Activated CD4-positive, alpha-beta memory T cell treated with anti-CD3 and anti-CD28 coated beads for 36 hours (primary cell): ENCODE measurements at regions of chr6 and their contacts with region 1.

Region 1: DNA sequence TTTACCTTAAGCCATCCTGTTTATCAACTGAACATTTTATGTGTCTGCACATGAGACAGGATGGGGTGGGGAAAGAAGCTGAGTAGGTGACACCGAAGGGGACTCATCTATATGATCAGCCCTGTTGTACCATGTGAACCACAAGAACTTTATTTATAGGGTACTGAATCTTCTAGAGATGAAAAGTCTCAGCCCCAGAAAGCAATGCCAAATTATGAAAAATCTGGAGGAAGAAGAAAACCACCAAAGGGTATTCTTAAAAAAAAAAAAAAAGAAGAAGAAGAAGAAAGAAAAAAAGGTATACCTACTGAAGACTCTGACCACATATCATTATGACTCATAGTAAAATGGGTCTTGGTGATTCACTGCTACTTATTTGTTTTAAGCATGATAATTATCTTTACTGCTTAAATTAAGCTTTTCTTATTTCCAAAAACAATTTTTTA is 39.8 kb upstream of the HBS1L start:
- DNase-seq: peak; percentile 50
- H3K4me3 Mint-ChIP-seq: no peak overlapping the region
- H3K27ac Mint-ChIP-seq: peak overlapping the region; percentile 76
- H3K4me1 Mint-ChIP-seq: peaks cover 49% of the 10 kb centered on the region
- H3K27me3 Mint-ChIP-seq: no peaks in the 10 kb centered on the region

Region 2: GRCh38 chr6:134938896-134939295 is 155.5 kb before region 1 on chr6:
- CTCF ChIA-PET with region 1: no interaction called
- POLR2A ChIA-PET with region 1: no interaction called
- intact Hi-C with region 1: no loop called
- DNase-seq: peak; percentile 87
- H3K4me3 Mint-ChIP-seq: no peak overlapping the region
- H3K27ac Mint-ChIP-seq: no peak overlapping the region
- H3K4me1 Mint-ChIP-seq: peaks cover 20% of the 10 kb centered on the region
- H3K27me3 Mint-ChIP-seq: no peaks in the 10 kb centered on the region

Region 3: GRCh38 chr6:134954272-134955000 is 140.0 kb before region 1 on chr6:
- CTCF ChIA-PET with region 1: no interaction called
- POLR2A ChIA-PET with region 1: no interaction called
- intact Hi-C with region 1: no loop called
- DNase-seq: no peak
- H3K4me3 Mint-ChIP-seq: no peak overlapping the region
- H3K27ac Mint-ChIP-seq: no peak overlapping the region
- H3K4me1 Mint-ChIP-seq: peaks cover 16% of the 10 kb centered on the region
- H3K27me3 Mint-ChIP-seq: no peaks in the 10 kb centered on the region

Region 4: GRCh38 chr6:135105710-135106109 is 11.3 kb after region 1 on chr6:
- CTCF ChIA-PET with region 1: no interaction called
- POLR2A ChIA-PET with region 1: no interaction called
- intact Hi-C with region 1: loop called (anchors 1 kb)
- DNase-seq: no peak
- H3K4me3 Mint-ChIP-seq: no peak overlapping the region
- H3K27ac Mint-ChIP-seq: no peak overlapping the region
- H3K4me1 Mint-ChIP-seq: peaks cover 28% of the 10 kb centered on the region
- H3K27me3 Mint-ChIP-seq: no peaks in the 10 kb centered on the region